CD14-positive monocyte (primary cell): ENCODE measurements at regions of chr10 and their contacts with region 1.

Region 1: GRCh38 chr10:35387768-35388167 is 51.5 kb downstream of the CCNY start:
- DNase-seq: peak; percentile 20 to 41 (median 26)
- H3K4me3 ChIP-seq: no peak overlapping the region
- H3K4me3 Mint-ChIP-seq: no peak overlapping the region
- H3K27ac ChIP-seq: peak overlapping the region in 1 of 2 donors; percentile 71
- H3K27ac Mint-ChIP-seq: peak overlapping the region; percentile 16 to 82 (median 51)
- H3K4me1 ChIP-seq: peaks cover 25 to 35% of the 10 kb centered on the region in 2 donors
- H3K4me1 Mint-ChIP-seq: peaks cover 62% of the 10 kb centered on the region
- H3K27me3 ChIP-seq: no peaks in the 10 kb centered on the region
- H3K27me3 Mint-ChIP-seq: no peaks in the 10 kb centered on the region
- CTCF ChIP-seq: no peak

Region 2: GRCh38 chr10:35182629-35183510 is 204.9 kb before region 1 on chr10:
- intact Hi-C with region 1: no loop called
- DNase-seq: no peak
- H3K4me3 ChIP-seq: no peak overlapping the region
- H3K4me3 Mint-ChIP-seq: no peak overlapping the region
- H3K27ac ChIP-seq: no peak overlapping the region
- H3K27ac Mint-ChIP-seq: no peak overlapping the region
- H3K4me1 ChIP-seq: peaks cover 0 to 2% of the 10 kb centered on the region in 2 donors
- H3K4me1 Mint-ChIP-seq: peaks cover 8% of the 10 kb centered on the region
- H3K27me3 ChIP-seq: no peaks in the 10 kb centered on the region
- H3K27me3 Mint-ChIP-seq: no peaks in the 10 kb centered on the region
- CTCF ChIP-seq: no peak

Region 3: GRCh38 chr10:35336084-35336831 is 51.5 kb before region 1 on chr10 and contains the start of gene CCNY:
- intact Hi-C with region 1: no loop called
- DNase-seq: peak; percentile 38 to 60 (median 46)
- H3K4me3 ChIP-seq: peak within 1 kb of the TSS; percentile 85 to 93 (median 88)
- H3K4me3 Mint-ChIP-seq: peak within 1 kb of the TSS; percentile 89 to 96
- H3K27ac ChIP-seq: peak within 1 kb of the TSS; percentile 19 to 71
- H3K27ac Mint-ChIP-seq: peak within 1 kb of the TSS; percentile 57 to 90 (median 86)
- H3K4me1 ChIP-seq: peaks cover 45 to 68% of the 10 kb centered on the region in 2 donors
- H3K4me1 Mint-ChIP-seq: peaks cover 69% of the 10 kb centered on the region
- H3K27me3 ChIP-seq: no peaks in the 10 kb centered on the region
- H3K27me3 Mint-ChIP-seq: peaks cover 0 to 1% (median 0%) of the 10 kb centered on the region in 3 donors
- CTCF ChIP-seq: no peak
- polyA plus RNA-seq, gene CCNY: 39.9 to 116 (median 64.8) TPM

Region 4: GRCh38 chr10:35435824-35436223 is 48.1 kb after region 1 on chr10:
- intact Hi-C with region 1: loop called in 1 of 2 experiments (anchors 5 kb)
- DNase-seq: peak; percentile 38 to 65 (median 47)
- H3K4me3 ChIP-seq: peak overlapping the region in 1 of 3 experiments; percentile 17
- H3K4me3 Mint-ChIP-seq: peak overlapping the region in 1 of 2 donors; percentile 63
- H3K27ac ChIP-seq: peak overlapping the region; percentile 70 to 79
- H3K27ac Mint-ChIP-seq: peak overlapping the region; percentile 72 to 92 (median 88)
- H3K4me1 ChIP-seq: peaks cover 29 to 39% of the 10 kb centered on the region in 2 donors
- H3K4me1 Mint-ChIP-seq: peaks cover 68% of the 10 kb centered on the region
- H3K27me3 ChIP-seq: no peaks in the 10 kb centered on the region
- H3K27me3 Mint-ChIP-seq: no peaks in the 10 kb centered on the region
- CTCF ChIP-seq: no peak

Region 5: GRCh38 chr10:35462491-35462934 is 74.7 kb after region 1 on chr10:
- intact Hi-C with region 1: no loop called
- DNase-seq: no peak
- H3K4me3 ChIP-seq: no peak overlapping the region
- H3K4me3 Mint-ChIP-seq: no peak overlapping the region
- H3K27ac ChIP-seq: peak overlapping the region; percentile 9 to 50
- H3K27ac Mint-ChIP-seq: peak overlapping the region in 5 of 7 donors; percentile 6 to 58 (median 30)
- H3K4me1 ChIP-seq: peaks cover 41 to 47% of the 10 kb centered on the region in 2 donors
- H3K4me1 Mint-ChIP-seq: peaks cover 37% of the 10 kb centered on the region
- H3K27me3 ChIP-seq: no peaks in the 10 kb centered on the region
- H3K27me3 Mint-ChIP-seq: peaks cover 0 to 2% (median 0%) of the 10 kb centered on the region in 3 donors
- CTCF ChIP-seq: no peak